Activated CD8-positive, alpha-beta T cell treated with anti-CD3 and anti-CD28 coated beads for 36 hours (primary cell): ENCODE measurements at regions of chr4 and their contacts with region 1.

Region 1: GRCh38 chr4:75844151-75844662 is 58.0 kb downstream of the PPEF2 start:
- DNase-seq: no peak
- ATAC-seq: no peak
- H3K4me3 Mint-ChIP-seq: no peak overlapping the region
- H3K27ac Mint-ChIP-seq: no peak overlapping the region
- H3K4me1 Mint-ChIP-seq: peaks cover 8% of the 10 kb centered on the region
- H3K27me3 Mint-ChIP-seq: no peaks in the 10 kb centered on the region
- CTCF ChIP-seq: no peak

Region 2: GRCh38 chr4:75565481-75565880 is 278.7 kb before region 1 on chr4:
- CTCF ChIA-PET with region 1: interaction called, 10 read pairs
- POLR2A ChIA-PET with region 1: no interaction called
- intact Hi-C with region 1: no loop called
- DNase-seq: no peak
- ATAC-seq: no peak
- H3K4me3 Mint-ChIP-seq: no peak overlapping the region
- H3K27ac Mint-ChIP-seq: no peak overlapping the region
- H3K4me1 Mint-ChIP-seq: no peaks in the 10 kb centered on the region
- H3K27me3 Mint-ChIP-seq: peaks cover 2% of the 10 kb centered on the region
- CTCF ChIP-seq: no peak

Region 3: GRCh38 chr4:75831856-75832405 is 12.3 kb before region 1 on chr4:
- CTCF ChIA-PET with region 1: interaction called, 13 read pairs
- POLR2A ChIA-PET with region 1: no interaction called
- intact Hi-C with region 1: no loop called
- DNase-seq: no peak
- ATAC-seq: no peak
- H3K4me3 Mint-ChIP-seq: no peak overlapping the region
- H3K27ac Mint-ChIP-seq: no peak overlapping the region
- H3K4me1 Mint-ChIP-seq: no peaks in the 10 kb centered on the region
- H3K27me3 Mint-ChIP-seq: no peaks in the 10 kb centered on the region
- CTCF ChIP-seq: no peak